ENCODE measurements at regions of chr5 and their contacts with region 1.

Region 1: GRCh38 chr5:150065361-150065760 is 21.0 kb downstream of the CSF1R start:
- DNase-seq: no peak
- H3K4me3 ChIP-seq: no peak overlapping the region
- H3K27ac ChIP-seq: no peak overlapping the region
- H3K4me1 ChIP-seq: peaks cover 29% of the 10 kb centered on the region
- H3K27me3 ChIP-seq: no peaks in the 10 kb centered on the region
- CTCF ChIP-seq: no peak
- POLR2A ChIP-seq: no peak

Region 2: DNA sequence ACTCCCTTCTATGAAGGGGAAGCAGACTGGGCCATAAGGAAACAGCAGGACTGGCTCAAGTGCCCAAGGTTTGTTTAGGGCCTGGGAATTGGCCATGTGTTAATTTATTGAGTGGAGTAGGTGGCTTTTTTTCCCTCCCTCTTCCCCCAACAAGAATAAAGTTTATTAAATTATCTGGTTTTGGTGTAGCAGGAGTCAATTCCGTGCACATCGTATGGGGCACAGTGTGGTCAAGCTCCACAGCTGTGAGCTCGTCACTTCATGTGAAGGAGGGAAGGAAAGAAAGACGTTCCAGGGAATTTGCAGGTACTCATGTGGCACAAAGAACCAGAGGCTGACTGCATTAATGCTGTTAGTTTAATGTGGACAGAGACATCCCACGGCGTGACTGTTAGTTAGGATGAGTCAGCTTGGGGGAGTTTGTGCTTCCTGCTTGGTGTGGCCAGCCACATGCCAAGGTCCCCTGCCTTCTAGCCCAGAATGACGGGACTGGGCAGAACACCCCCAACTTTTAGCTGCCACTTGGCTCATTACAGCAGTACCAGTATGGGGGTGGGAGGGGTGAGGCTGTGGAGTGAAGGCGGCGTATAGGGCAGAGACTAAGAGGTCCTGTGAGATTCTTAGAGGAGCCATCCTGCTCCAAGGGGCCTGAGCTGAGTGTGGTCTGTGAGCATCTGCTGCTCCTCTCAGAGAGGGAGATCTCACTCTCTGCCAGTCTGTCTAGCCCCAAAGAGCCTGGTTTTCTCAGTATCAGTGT is 12.2 kb before region 1 on chr5:
- CTCF ChIA-PET with region 1: interaction called, 11 read pairs
- POLR2A ChIA-PET with region 1: no interaction called
- dilution Hi-C with region 1: no loop called
- intact Hi-C with region 1: no loop called
- DNase-seq: peak; percentile 16
- H3K4me3 ChIP-seq: no peak overlapping the region
- H3K27ac ChIP-seq: peak overlapping the region; percentile 28
- H3K4me1 ChIP-seq: peaks cover 31% of the 10 kb centered on the region
- H3K27me3 ChIP-seq: no peaks in the 10 kb centered on the region
- CTCF ChIP-seq: no peak
- POLR2A ChIP-seq: no peak

Region 3: GRCh38 chr5:150075871-150076288 is 10.5 kb after region 1 on chr5:
- CTCF ChIA-PET with region 1: interaction called, 14 read pairs
- POLR2A ChIA-PET with region 1: no interaction called
- dilution Hi-C with region 1: no loop called
- intact Hi-C with region 1: no loop called
- DNase-seq: no peak
- H3K4me3 ChIP-seq: no peak overlapping the region
- H3K27ac ChIP-seq: no peak overlapping the region
- H3K4me1 ChIP-seq: no peaks in the 10 kb centered on the region
- H3K27me3 ChIP-seq: peaks cover 4 to 14% of the 10 kb centered on the region in 2 experiments
- CTCF ChIP-seq: no peak
- POLR2A ChIP-seq: no peak

Region 4: DNA sequence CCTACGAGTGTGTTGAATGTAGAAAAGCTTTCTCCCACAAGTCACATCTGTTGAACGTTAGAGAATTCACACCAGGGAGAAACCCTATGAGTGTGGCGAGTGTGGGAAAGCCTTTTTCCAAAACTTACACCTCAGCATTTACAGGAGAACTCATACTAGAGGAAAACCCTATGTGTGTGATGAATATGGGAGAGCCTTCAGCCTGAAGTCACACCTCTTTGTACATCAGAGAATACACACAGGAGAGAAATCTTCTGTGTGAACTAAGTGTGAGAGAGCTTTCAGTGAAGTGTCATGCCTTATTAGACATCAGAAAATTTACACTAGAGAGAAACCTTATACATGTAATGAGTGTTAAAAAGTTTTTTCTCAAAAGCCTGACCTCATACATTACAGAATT is 913.2 kb after region 1 on chr5:
- CTCF ChIA-PET with region 1: no interaction called
- POLR2A ChIA-PET with region 1: no interaction called
- dilution Hi-C with region 1: no loop called
- intact Hi-C with region 1: no loop called
- DNase-seq: no peak
- H3K4me3 ChIP-seq: no peak overlapping the region
- H3K27ac ChIP-seq: no peak overlapping the region
- H3K4me1 ChIP-seq: no peaks in the 10 kb centered on the region
- H3K27me3 ChIP-seq: no peaks in the 10 kb centered on the region
- CTCF ChIP-seq: no peak
- POLR2A ChIP-seq: no peak

Measured in endothelial cell of umbilical vein (primary cell).